Common myeloid progenitor, CD34-positive (primary cell): ENCODE measurements at regions of chr1 and their contacts with region 1.

Region 1: DNA sequence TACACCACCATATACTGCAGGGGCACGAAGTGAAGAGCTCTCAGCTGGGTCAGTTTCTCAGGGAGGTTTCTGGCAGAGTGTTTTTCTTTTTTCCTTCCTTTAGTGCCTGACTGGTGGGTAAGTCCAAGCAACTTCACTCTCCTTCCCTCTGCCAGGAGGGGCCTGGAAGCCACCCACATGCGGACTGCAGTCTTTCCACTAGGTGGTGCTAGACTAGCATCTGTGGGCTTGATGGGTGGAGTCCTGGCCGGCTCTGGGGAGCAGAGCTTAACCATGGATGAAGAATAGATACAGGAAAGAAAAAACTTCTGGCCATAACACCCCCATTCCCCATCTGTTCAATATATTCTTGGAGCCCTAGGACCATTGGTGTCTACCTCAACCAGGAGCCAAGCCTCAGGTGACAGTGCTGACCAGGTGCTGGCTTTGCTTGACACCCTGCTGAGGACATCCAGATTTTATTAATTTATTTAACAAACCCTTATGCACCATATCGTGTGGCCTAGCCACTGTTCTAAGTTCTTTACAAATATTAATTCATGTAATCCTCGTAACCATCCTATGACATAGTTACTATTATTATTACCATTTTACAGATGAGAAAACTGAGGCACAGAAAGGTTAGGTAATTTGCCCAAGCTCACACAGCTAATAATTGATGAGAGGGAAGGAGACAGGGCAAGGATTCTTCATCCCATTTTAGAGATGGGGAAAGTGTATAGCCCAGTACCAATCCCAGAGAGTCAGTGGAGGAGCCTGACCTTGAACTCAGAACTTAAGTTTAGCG is 126.7 kb upstream of the CSF3R start:
- DNase-seq: peak; percentile 68 to 82 (median 80)
- H3K4me3 ChIP-seq: no peak overlapping the region
- H3K27ac ChIP-seq: no peak overlapping the region
- H3K4me1 ChIP-seq: no peaks in the 10 kb centered on the region
- H3K27me3 ChIP-seq: peaks cover 0 to 2% (median 0%) of the 10 kb centered on the region in 5 experiments

Region 2: GRCh38 chr1:36622741-36623648 is 13.6 kb after region 1 on chr1:
- CTCF ChIA-PET with region 1: interaction called, 17 read pairs
- POLR2A ChIA-PET with region 1: no interaction called
- DNase-seq: peak; percentile 58 to 86 (median 75)
- H3K4me3 ChIP-seq: peak overlapping the region in 3 of 7 experiments; percentile 1 to 23 (median 14)
- H3K27ac ChIP-seq: no peak overlapping the region
- H3K4me1 ChIP-seq: peaks cover 6 to 32% (median 15%) of the 10 kb centered on the region in 4 experiments
- H3K27me3 ChIP-seq: peaks cover 0 to 8% (median 0%) of the 10 kb centered on the region in 5 experiments